GM23248 (cell line): ENCODE measurements at regions of chr17 and their contacts with region 1.

Region 1: GRCh38 chr17:49680314-49680713 is 2.4 kb upstream of the SPOP start:
- DNase-seq: no peak
- H3K4me3 ChIP-seq: no peak overlapping the region
- H3K27ac ChIP-seq: no peak overlapping the region
- H3K4me1 ChIP-seq: peaks cover 21% of the 10 kb centered on the region
- H3K27me3 ChIP-seq: no peaks in the 10 kb centered on the region

Region 2: DNA sequence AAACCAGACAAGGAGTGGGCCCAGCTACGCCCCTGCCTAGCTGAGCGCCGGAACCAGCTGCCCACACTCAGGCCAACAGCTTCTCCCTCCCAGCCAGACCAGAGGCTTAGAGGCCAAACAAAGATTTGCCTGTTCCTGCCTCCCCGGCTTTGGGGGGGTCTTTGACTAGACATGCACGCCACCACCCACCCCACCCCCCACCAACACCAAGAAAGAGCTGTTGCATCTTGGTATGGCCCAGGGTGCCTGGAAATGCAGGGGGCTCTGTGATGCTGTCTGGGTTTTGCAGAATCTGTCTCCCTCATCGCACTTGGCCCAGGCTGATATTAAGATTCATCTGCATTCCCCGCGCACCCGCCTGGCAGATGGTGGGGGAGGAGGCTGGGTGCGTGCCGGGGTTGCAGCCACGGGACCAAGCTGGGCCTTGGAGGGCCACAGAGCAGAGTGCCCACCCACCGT is 106.0 kb before region 1 on chr17:
- in situ Hi-C with region 1: loop called (anchors 5 kb)
- DNase-seq: no peak
- H3K4me3 ChIP-seq: no peak overlapping the region
- H3K27ac ChIP-seq: no peak overlapping the region
- H3K4me1 ChIP-seq: no peaks in the 10 kb centered on the region
- H3K27me3 ChIP-seq: 0 out of 2 replicates have a peak, but pooled peaks cover 3% of the 10 kb centered on the region